ENCODE measurements at regions of chr4 and their contacts with region 1.

Region 1: DNA sequence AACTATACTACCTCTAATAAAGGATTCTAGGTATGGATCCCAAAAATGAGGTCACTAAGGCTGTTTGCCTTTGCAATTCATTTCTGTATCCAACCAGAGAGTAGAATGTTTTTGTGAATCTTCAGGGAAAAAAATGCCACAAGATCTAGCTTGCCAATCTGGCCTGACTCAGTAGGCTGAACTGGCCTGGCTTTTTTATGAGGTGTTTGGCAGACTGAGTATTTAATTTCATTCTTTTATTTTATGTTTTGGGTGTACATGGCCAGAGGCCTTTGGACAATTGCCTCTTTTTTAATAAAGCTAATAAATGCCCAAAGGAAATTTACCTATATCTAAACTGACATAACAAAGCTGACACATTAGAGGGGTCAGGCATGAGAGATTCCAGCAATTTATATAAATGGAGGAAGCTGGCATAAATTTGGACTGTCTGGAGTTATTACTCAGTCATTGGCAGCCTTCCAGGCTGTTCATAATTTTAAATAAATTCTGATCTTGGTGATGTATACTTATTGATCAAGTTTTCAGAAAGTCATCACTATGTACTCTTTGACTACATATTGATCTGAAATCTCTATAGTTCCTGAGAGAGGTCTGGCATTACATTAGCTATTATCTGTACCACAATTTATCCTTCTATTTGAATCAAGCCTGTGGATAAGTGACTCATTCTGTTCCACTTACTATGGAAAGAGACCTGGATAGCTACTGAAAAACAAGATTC is 376.4 kb upstream of the NOCT start:
- DNase-seq: no peak
- ATAC-seq: no peak
- H3K4me3 Mint-ChIP-seq: no peak overlapping the region
- H3K27ac Mint-ChIP-seq: no peak overlapping the region
- H3K4me1 Mint-ChIP-seq: no peaks in the 10 kb centered on the region
- H3K27me3 Mint-ChIP-seq: peaks cover 4% of the 10 kb centered on the region
- CTCF ChIP-seq: no peak

Region 2: GRCh38 chr4:137923494-137923893 is 715.7 kb before region 1 on chr4:
- CTCF ChIA-PET with region 1: no interaction called
- POLR2A ChIA-PET with region 1: interaction called, 11 read pairs
- intact Hi-C with region 1: no loop called
- DNase-seq: no peak
- ATAC-seq: no peak
- H3K4me3 Mint-ChIP-seq: no peak overlapping the region
- H3K27ac Mint-ChIP-seq: no peak overlapping the region
- H3K4me1 Mint-ChIP-seq: no peaks in the 10 kb centered on the region
- H3K27me3 Mint-ChIP-seq: no peaks in the 10 kb centered on the region
- CTCF ChIP-seq: no peak

Region 3: GRCh38 chr4:138070816-138071215 is 568.4 kb before region 1 on chr4:
- CTCF ChIA-PET with region 1: no interaction called
- POLR2A ChIA-PET with region 1: no interaction called
- intact Hi-C with region 1: no loop called
- DNase-seq: no peak
- ATAC-seq: no peak
- H3K4me3 Mint-ChIP-seq: no peak overlapping the region
- H3K27ac Mint-ChIP-seq: no peak overlapping the region
- H3K4me1 Mint-ChIP-seq: no peaks in the 10 kb centered on the region
- H3K27me3 Mint-ChIP-seq: peaks cover 10% of the 10 kb centered on the region
- CTCF ChIP-seq: no peak